ENCODE measurements at regions of chr10 and their contacts with region 1.

Region 1: GRCh38 chr10:88932539-88933256 is 19.9 kb downstream of the ACTA2 start:
- DNase-seq: no peak
- ATAC-seq: peak; percentile 78 to 84 (median 80)
- H3K4me3 ChIP-seq: no peak overlapping the region
- H3K27ac ChIP-seq: no peak overlapping the region
- H3K4me1 ChIP-seq: peaks cover 0 to 9% (median 0%) of the 10 kb centered on the region in 4 donors
- H3K27me3 ChIP-seq: no peaks in the 10 kb centered on the region
- CTCF ChIP-seq: peak; percentile 84 to 93 (median 85)
- POLR2A ChIP-seq: no peak

Region 2: DNA sequence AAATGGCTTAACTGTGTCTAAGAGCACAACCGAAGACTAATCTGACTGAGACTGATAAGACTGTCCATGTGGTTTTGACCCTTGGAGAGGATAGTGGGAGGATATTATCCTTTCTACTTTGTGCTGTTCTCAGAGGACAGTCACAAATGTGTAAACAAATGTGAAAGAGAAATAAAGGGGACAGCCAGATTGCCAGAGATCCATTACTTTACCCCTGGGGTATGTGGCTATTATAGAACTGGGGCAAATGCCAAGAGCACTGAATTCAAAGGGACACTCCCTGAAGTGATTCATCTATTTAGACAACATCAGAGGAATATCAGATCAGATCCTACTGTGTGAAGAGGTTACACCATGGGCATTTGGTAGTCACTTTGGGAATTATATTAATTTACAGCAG is 504.3 kb before region 1 on chr10:
- intact Hi-C with region 1: no loop called
- DNase-seq: no peak
- ATAC-seq: peak in 1 of 4 donors; percentile 98
- H3K4me3 ChIP-seq: no peak overlapping the region
- H3K27ac ChIP-seq: no peak overlapping the region
- H3K4me1 ChIP-seq: no peaks in the 10 kb centered on the region
- H3K27me3 ChIP-seq: no peaks in the 10 kb centered on the region
- CTCF ChIP-seq: no peak
- POLR2A ChIP-seq: no peak

Region 3: DNA sequence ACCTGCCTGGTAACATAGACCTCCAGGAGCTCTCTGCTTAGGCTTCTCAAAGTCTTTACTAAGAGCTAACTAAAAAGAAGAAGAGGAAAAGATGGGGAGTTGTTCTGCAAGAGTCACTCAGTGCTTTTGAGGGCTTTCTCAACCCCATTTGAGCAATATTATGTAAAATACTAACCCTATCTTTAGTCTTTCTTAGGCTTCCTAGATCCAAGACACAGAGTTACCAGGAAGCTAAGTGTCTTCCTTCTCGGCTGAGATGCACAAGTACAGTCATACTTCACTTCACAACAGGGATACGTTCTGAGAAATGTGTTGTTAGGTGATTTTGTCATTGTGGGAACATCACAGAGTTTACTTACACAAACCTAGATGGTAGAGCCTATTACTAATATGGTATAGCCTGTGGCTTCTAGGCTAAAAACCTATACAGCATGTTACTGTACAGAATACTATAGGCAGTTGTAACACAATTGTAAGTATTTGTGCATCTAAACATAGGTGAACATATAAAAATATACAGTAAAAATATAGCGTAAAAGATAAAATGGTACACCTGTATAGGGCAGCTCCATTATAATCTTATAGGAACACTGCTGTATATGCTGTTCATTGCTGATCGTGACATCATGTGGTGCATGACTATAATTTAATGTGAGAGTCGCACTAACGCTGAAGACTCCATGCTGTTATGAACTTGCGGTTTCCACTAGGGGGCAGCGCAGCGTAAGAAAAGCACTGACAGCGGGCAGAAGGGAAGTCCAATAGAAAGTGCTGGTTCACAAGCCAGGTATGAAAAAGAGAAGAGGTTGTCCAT is 97.4 kb before region 1 on chr10:
- intact Hi-C with region 1: loop called in 1 of 2 experiments (anchors 10 kb)
- DNase-seq: peak; percentile 75 to 86 (median 86)
- ATAC-seq: peak; percentile 91 to 95 (median 92)
- H3K4me3 ChIP-seq: no peak overlapping the region
- H3K27ac ChIP-seq: no peak overlapping the region
- H3K4me1 ChIP-seq: peaks cover 0 to 13% (median 0%) of the 10 kb centered on the region in 4 donors
- H3K27me3 ChIP-seq: no peaks in the 10 kb centered on the region
- CTCF ChIP-seq: peak; percentile 90 to 97 (median 94)
- POLR2A ChIP-seq: no peak

Region 4: DNA sequence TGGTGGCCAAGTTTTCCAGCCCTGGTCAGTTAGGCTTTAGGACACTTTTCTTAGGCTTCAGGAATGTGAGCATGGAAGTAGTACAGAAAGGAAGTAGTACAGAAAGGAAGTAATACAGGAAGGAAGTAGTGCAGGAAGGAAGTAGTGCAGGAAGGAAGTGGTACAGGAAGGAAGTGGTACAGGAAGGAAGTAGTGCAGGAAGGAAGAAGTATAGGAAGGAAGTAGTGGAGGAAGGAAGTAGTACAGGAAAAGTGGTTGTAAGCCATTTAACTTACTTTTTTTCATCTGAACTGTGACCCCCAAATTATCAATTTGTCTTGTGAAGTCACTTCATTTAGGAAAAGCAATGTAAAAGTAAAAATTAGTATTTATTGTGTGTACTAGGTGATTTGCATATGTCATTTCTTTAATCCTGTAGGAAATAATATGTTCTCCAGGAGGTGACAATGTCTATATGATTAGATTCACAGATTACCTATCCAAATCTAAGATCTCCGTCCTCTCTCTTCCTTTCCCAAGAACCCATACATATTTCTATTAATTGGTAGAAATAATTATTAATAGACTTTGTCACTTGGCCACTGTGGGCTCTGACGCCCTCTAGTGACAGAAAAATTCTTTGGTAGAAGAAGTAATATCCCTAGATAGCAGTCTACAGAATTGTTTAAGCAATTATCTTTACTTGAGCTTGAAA is 54.0 kb after region 1 on chr10:
- intact Hi-C with region 1: loop called (anchors 5 to 10 kb)
- DNase-seq: no peak
- ATAC-seq: no peak
- H3K4me3 ChIP-seq: no peak overlapping the region
- H3K27ac ChIP-seq: peak overlapping the region in 1 of 3 donors; percentile 99
- H3K4me1 ChIP-seq: peaks cover 0 to 31% (median 11%) of the 10 kb centered on the region in 4 donors
- H3K27me3 ChIP-seq: no peaks in the 10 kb centered on the region
- CTCF ChIP-seq: peak; percentile 75 to 85 (median 83)
- POLR2A ChIP-seq: no peak

Measured in right lobe of liver (tissue), 6 donors.